Gastrocnemius medialis (tissue), 4 donors: ENCODE measurements at regions of chr17 and their contacts with region 1.

Region 1: GRCh38 chr17:42964161-42964932 is at the start of gene AARSD1:
- DNase-seq: peak; percentile 85 to 92
- ATAC-seq: peak; percentile 95 to 97
- H3K4me3 ChIP-seq: peak within 1 kb of the TSS; percentile 66 to 83 (median 75)
- H3K27ac ChIP-seq: peak within 1 kb of the TSS; percentile 77 to 89 (median 82)
- H3K4me1 ChIP-seq: peaks cover 7 to 8% of the 10 kb centered on the region in 2 donors
- H3K27me3 ChIP-seq: no peaks in the 10 kb centered on the region
- CTCF ChIP-seq: peak in 1 of 5 experiments; percentile 14
- POLR2A ChIP-seq: peak; percentile 71 to 82
- total RNA-seq, gene AARSD1: 21.4 to 30.1 (median 26.5) TPM

Region 2: DNA sequence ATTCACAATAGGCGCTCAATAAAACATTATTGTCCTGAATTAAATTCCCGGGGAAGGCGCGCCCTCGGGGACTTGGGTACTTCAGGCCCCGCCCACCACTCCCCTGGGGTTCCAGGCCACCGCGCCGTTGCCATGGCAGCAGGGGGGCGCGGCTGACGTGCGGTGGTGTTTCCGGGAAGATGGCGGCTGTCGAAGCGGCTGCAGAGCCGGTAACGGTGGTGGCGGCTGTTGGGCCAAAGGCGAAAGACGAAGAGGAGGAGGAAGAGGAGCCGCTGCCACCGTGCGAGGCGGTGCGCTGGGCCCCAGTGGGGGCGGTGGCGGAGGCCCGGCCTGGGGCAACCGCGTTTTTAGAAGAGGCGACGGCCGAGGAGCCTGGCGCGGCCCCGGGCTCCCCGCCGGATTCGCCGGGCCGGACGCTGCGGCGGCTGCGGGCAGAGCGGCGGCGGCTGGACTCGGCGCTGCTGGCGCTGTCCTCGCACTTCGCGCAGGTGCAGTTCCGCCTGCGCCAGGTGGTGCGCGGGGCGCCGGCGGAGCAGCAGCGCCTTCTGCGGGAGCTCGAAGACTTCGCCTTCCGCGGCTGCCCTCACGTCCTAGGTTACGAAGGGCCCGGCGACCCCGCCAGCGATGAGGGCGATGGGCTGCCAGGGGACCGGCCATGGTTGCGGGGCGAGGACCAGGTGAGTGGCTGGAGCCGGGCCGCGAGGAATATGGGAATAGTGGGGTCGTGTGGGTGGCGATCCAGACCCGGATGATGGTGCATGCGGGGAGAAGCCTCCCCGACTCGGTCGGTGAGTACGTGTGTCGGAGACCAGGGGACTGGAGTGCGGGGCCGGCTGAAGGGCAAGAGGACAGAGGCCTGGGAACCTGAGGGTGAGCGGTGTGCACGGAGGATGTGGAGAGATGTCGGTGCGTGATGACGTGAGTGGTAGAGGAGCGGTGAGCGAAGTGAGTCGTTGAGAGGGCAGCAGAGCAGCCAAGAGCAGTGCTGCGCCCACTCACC is 16.4 kb after region 1 on chr17 and contains the start of gene RUNDC1:
- in situ Hi-C with region 1: no loop called
- intact Hi-C with region 1: loop called (anchors 1 kb)
- DNase-seq: peak; percentile 79 to 87
- ATAC-seq: peak; percentile 76 to 82
- H3K4me3 ChIP-seq: peak within 1 kb of the TSS; percentile 78 to 91 (median 86)
- H3K27ac ChIP-seq: peak within 1 kb of the TSS; percentile 96 to 98 (median 98)
- H3K4me1 ChIP-seq: peaks cover 12 to 23% of the 10 kb centered on the region in 2 donors
- H3K27me3 ChIP-seq: no peaks in the 10 kb centered on the region
- CTCF ChIP-seq: peak in 4 of 5 experiments; percentile 13 to 33 (median 26)
- POLR2A ChIP-seq: peak; percentile 27 to 41
- total RNA-seq, gene RUNDC1: 13.8 to 19.8 (median 16.4) TPM